SK-N-SH (cell line): ENCODE measurements at regions of chr1 and their contacts with region 1.

Region 1: GRCh38 chr1:29703596-29704370 is 467.5 kb downstream of the PTPRU start:
- DNase-seq: peak; percentile 81
- H3K4me3 ChIP-seq: no peak overlapping the region
- H3K27ac ChIP-seq: no peak overlapping the region; a peak in 1 of 4 replicates
- H3K4me1 ChIP-seq: peaks cover 12 to 41% of the 10 kb centered on the region in 2 experiments
- H3K27me3 ChIP-seq: no peaks in the 10 kb centered on the region
- CTCF ChIP-seq: peak; percentile 72
- EP300 ChIP-seq: no peak
- RAD21 ChIP-seq: peak; percentile 76

Region 2: DNA sequence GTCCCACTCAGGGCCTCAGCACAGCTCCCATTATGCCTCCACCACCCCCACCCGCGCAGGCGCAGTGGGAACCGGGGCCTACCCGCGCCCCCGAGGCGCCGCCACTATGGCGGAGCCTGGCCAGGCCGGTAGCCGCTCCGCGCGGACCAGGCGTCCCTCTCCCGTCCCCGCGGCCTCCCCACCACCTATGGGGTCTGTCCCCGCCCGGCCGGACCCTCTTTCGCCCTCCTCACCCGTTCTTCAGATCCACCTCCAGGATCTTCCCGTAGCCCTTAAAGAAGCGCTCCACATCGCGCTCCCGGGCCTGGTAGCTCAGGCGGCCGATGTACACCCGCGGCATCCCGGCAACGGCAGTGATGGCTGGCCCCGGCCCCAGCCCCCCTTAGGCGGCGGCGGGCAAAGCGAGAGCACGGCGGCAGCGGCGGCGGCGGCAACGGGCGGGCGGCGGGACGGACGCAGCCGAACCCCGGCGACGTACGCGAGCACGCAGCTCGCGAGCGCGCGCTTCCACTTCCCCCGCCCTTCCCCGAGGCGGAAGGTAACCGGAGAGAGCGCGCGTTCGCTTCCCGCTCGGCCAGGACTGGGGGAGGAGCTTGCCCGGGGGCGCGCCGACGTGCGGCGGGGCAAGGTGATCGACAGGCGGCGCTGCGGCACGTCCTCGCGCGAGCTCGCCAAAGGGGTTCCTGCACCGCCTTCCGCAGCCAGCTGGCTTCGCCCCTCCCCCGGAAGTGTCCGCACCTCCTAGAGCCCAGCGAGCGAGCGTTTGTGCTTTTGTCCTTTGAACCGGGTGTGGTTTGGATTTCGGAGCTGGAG is 522.2 kb before region 1 on chr1 and contains the start of gene SRSF4:
- CTCF ChIA-PET with region 1: no interaction called
- POLR2A ChIA-PET with region 1: no interaction called
- DNase-seq: peak; percentile 98
- H3K4me3 ChIP-seq: peak within 1 kb of the TSS; percentile 86 to 95
- H3K27ac ChIP-seq: peak within 1 kb of the TSS; percentile 98 to 99
- H3K4me1 ChIP-seq: peaks cover 10 to 23% of the 10 kb centered on the region in 2 experiments; a peak in 3 of 4 replicates
- H3K27me3 ChIP-seq: no peaks in the 10 kb centered on the region
- CTCF ChIP-seq: peak; percentile 59
- EP300 ChIP-seq: no peak
- RAD21 ChIP-seq: peak; percentile 47
- polyA plus RNA-seq, gene SRSF4: 55.3 and 62.6 TPM in 2 replicates

Region 3: DNA sequence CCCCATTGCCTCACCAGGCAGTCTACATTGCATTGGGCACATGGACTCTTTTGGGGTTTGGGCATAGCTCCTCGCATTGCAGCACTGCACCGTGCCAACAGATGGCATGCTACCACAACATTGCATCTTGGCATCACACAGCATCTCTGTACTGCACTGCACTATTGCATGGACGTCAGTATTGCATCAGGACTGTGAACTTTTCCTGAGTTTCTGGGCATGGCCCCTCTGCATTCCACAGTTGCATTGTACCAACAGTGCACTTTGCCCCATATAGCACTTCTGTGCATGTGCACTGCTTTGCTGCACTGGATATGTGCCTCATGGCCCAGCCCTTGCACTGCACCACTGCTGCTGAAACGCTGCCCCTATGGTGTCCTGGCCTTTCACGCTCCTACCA is 457.9 kb before region 1 on chr1:
- CTCF ChIA-PET with region 1: interaction called, 23 read pairs
- POLR2A ChIA-PET with region 1: no interaction called
- DNase-seq: peak; percentile 68
- H3K4me3 ChIP-seq: no peak overlapping the region
- H3K27ac ChIP-seq: no peak overlapping the region
- H3K4me1 ChIP-seq: peaks cover 6 to 64% of the 10 kb centered on the region in 2 experiments; a peak in 2 of 4 replicates
- H3K27me3 ChIP-seq: no peaks in the 10 kb centered on the region
- CTCF ChIP-seq: peak; percentile 67
- EP300 ChIP-seq: no peak
- RAD21 ChIP-seq: peak; percentile 90

Region 4: DNA sequence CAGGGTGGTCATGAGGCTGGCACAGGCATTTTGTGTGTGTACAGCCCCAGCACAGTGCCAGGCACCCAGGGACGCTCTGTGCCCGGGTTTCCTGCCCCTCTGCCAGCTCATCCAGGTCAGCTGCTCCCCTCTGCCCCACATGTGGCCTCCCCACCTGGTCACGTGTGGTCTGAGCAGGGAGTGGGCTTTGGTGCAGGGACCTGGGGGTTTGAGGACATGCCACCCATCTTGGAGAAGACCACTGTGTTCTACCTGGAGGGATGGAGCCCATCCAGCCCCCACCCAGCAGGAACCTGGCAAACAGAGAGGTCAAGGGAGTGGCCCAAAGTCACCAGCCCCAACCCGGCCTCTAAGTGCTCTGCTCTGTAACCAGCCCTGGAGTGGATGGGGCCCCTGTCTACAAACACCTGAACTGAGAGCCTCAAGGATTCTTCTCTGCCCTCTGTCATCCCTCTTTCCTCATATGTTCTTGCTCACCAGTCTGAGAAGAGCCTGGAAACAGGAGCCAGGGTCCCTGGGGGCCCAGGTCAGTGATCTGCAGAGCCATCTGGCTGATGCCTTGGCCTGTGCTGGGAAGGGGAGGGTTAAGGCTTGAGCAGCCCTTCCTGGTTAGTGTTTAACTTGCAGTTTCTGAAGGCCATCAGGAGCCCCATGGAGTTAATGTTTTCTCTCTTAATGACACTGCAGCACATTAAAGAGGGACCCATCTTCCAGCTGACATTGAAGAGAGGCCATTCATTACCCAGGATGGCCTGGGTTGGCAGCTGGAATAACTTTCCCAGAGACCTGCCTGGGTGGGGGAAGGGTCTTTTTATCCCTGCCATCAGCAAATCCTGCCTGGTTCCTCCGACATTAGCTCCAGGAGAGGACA is 232.1 kb before region 1 on chr1:
- CTCF ChIA-PET with region 1: interaction called, 19 read pairs
- POLR2A ChIA-PET with region 1: interaction called, 9 read pairs
- DNase-seq: peak; percentile 64
- H3K4me3 ChIP-seq: no peak overlapping the region
- H3K27ac ChIP-seq: peak overlapping the region; percentile 35 to 100; a peak in 3 of 4 replicates
- H3K4me1 ChIP-seq: peaks cover 0 to 85% of the 10 kb centered on the region in 2 experiments; a peak in 2 of 4 replicates
- H3K27me3 ChIP-seq: no peaks in the 10 kb centered on the region; the same call in 1 of the 2 replicates
- CTCF ChIP-seq: no peak
- EP300 ChIP-seq: peak in 1 of 2 experiments; percentile 87; a peak in 2 of 4 replicates
- RAD21 ChIP-seq: 0 out of 2 replicates have a peak, but pooled peaks have one; percentile 19

Region 5: DNA sequence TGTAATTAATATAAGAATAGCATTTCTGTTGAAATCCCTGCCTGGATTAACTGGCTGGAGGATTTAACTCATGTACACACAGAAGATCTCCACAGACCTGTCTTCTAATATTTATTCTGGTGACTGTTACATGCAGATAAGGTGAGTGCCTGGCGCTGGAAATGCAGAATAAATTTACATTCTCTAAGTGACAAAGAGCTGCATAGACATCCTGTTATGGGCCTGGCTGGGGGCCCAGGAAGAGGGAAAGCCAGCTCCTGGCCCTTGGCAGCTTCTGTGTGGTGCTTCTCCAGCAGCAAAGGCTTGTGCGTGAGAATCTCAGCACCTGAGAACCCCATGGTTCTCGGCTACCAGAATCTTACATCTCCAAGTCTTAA is 20.9 kb before region 1 on chr1:
- CTCF ChIA-PET with region 1: interaction called, 57 read pairs
- POLR2A ChIA-PET with region 1: interaction called, 3 read pairs
- DNase-seq: peak; percentile 64
- H3K4me3 ChIP-seq: no peak overlapping the region
- H3K27ac ChIP-seq: peak overlapping the region in 1 of 2 experiments; percentile 93; a peak in 2 of 4 replicates
- H3K4me1 ChIP-seq: peaks cover 3 to 61% of the 10 kb centered on the region in 2 experiments; a peak in 3 of 4 replicates
- H3K27me3 ChIP-seq: no peaks in the 10 kb centered on the region
- CTCF ChIP-seq: no peak
- EP300 ChIP-seq: peak in 1 of 2 experiments; percentile 72; a peak in 2 of 4 replicates
- RAD21 ChIP-seq: no peak; the same call in 1 of the 2 replicates

Region 6: DNA sequence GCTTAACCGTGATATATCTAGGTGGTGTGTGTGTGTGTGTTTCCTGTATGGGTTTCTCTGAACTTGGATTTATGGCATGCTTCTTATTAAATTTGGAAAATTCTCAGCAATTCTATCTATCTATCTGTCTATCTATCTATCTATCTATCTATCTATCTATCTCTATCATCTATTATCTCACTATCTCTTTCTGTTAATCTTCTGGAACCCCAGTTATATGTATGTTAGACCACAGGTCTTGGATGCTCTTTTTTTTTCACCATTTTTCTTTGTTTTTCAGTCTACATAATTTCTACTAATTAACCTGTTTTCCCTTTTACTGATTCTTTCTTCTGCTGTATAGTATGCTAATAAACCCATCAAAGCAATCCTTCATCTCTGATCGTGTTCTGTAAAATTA is 70.6 kb after region 1 on chr1:
- CTCF ChIA-PET with region 1: no interaction called
- POLR2A ChIA-PET with region 1: no interaction called
- DNase-seq: no peak
- H3K4me3 ChIP-seq: no peak overlapping the region
- H3K27ac ChIP-seq: no peak overlapping the region
- H3K4me1 ChIP-seq: no peaks in the 10 kb centered on the region
- H3K27me3 ChIP-seq: no peaks in the 10 kb centered on the region
- CTCF ChIP-seq: no peak
- EP300 ChIP-seq: no peak
- RAD21 ChIP-seq: no peak

Region 7: GRCh38 chr1:29793101-29793546 is 89.3 kb after region 1 on chr1:
- CTCF ChIA-PET with region 1: interaction called, 35 read pairs
- POLR2A ChIA-PET with region 1: no interaction called
- DNase-seq: peak; percentile 74
- H3K4me3 ChIP-seq: no peak overlapping the region; a peak in 1 of 4 replicates
- H3K27ac ChIP-seq: no peak overlapping the region
- H3K4me1 ChIP-seq: peaks cover 0 to 12% of the 10 kb centered on the region in 2 experiments; a peak in 1 of 4 replicates
- H3K27me3 ChIP-seq: no peaks in the 10 kb centered on the region
- CTCF ChIP-seq: peak; percentile 78
- EP300 ChIP-seq: no peak
- RAD21 ChIP-seq: peak; percentile 96